ENCODE measurements at regions of chr20 and their contacts with region 1.

Region 1: DNA sequence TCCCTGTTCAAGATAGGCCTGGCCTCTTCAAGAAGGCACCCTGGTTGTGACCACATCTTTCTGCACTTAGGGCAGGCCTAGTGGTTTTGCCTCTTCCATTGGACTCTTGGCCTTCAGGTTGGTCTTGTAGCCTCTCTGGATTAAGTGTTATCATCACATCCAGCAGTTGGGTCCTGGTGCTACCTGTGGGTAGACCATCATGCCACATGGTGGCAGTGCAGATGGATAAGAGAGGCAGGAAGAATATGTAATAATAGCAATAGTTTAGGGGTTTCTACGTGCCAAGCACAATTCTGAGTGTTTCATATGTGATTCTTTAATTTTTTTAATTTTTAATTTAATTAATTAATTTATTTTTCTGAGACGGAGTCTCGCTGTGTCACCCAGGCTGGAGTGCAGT is 28.5 kb upstream of the SNRPB2 start:
- DNase-seq: no peak
- H3K4me3 ChIP-seq: no peak overlapping the region
- H3K27ac ChIP-seq: no peak overlapping the region
- H3K4me1 ChIP-seq: no peaks in the 10 kb centered on the region
- H3K27me3 ChIP-seq: no peaks in the 10 kb centered on the region
- CTCF ChIP-seq: no peak
- POLR2A ChIP-seq: no peak

Region 2: GRCh38 chr20:16451982-16452381 is 249.3 kb before region 1 on chr20:
- intact Hi-C with region 1: no loop called
- DNase-seq: no peak
- H3K4me3 ChIP-seq: no peak overlapping the region
- H3K27ac ChIP-seq: no peak overlapping the region
- H3K4me1 ChIP-seq: no peaks in the 10 kb centered on the region
- H3K27me3 ChIP-seq: no peaks in the 10 kb centered on the region
- CTCF ChIP-seq: no peak
- POLR2A ChIP-seq: no peak

Region 3: GRCh38 chr20:16689906-16690305 is 11.4 kb before region 1 on chr20:
- intact Hi-C with region 1: loop called (anchors 1 kb)
- DNase-seq: no peak
- H3K4me3 ChIP-seq: no peak overlapping the region
- H3K27ac ChIP-seq: no peak overlapping the region
- H3K4me1 ChIP-seq: no peaks in the 10 kb centered on the region
- H3K27me3 ChIP-seq: no peaks in the 10 kb centered on the region
- CTCF ChIP-seq: no peak
- POLR2A ChIP-seq: no peak